SK-N-SH (cell line): ENCODE measurements at regions of chr3 and their contacts with region 1.

Region 1: DNA sequence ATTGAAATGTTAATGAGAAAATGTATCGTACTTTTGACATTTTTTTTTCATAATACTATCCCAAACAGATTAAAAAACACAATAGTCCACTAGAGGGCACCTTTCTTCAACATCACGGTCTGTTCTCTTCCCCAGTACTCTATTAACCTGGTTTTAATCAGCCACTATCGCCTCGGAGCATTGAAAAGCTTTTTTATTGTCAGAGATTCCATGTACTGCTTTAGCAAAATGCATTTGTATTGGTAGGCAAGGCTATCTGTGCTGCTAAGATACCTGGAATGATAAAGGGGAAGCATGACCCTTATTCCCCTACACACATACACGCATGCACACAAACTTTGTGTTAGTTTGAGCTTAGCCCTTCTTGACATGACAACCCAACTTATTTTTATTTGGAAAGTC is 160.1 kb upstream of the IL12A start:
- DNase-seq: peak; percentile 74
- H3K4me3 ChIP-seq: peak overlapping the region in 1 of 2 experiments; percentile 23; a peak in 1 of 4 replicates
- H3K27ac ChIP-seq: peak overlapping the region; percentile 4 to 96; a peak in 3 of 4 replicates
- H3K4me1 ChIP-seq: peaks cover 20 to 39% of the 10 kb centered on the region in 2 experiments
- H3K27me3 ChIP-seq: no peaks in the 10 kb centered on the region
- CTCF ChIP-seq: peak; percentile 73
- EP300 ChIP-seq: peak in 1 of 2 experiments; percentile 81; a peak in 2 of 4 replicates
- RAD21 ChIP-seq: peak; percentile 89

Region 2: GRCh38 chr3:159751146-159751545 is 77.4 kb before region 1 on chr3:
- CTCF ChIA-PET with region 1: no interaction called
- POLR2A ChIA-PET with region 1: no interaction called
- DNase-seq: no peak
- H3K4me3 ChIP-seq: no peak overlapping the region
- H3K27ac ChIP-seq: no peak overlapping the region
- H3K4me1 ChIP-seq: no peaks in the 10 kb centered on the region
- H3K27me3 ChIP-seq: no peaks in the 10 kb centered on the region
- CTCF ChIP-seq: no peak
- EP300 ChIP-seq: no peak
- RAD21 ChIP-seq: no peak

Region 3: DNA sequence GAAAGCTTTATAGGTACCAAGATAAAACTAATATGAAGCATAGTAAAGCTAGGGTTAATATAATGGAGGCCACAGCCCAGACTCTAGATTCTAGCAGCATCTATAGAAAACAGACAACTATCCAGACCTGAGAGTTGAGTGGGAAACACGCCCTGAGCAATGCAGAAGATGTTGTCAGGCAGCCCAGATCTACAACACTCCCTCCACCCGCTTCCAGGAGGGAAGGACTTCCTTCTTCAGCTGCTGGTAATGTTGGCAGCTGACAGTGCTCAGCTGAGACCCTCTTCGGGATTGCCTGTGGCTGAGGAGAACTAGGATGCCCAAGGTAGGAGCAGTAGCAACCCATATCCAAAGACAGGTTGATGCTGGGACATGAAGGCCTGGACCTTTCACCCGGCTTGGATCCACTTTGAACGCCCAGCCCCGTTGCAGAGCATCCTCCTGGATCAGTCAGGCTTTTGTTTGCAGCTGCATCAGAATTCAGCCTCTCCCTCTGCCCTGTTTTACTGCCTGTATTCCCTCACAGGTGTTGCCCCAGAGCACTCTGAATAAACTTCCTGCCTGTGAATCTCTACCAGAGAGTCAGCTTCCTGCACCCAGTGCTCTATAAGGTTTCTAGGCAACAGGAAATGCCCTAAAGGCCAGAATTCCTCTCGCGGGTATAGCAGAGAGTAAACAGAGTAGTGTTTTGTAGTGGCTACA is 14.6 kb before region 1 on chr3:
- CTCF ChIA-PET with region 1: interaction called, 44 read pairs
- POLR2A ChIA-PET with region 1: no interaction called
- DNase-seq: no peak
- H3K4me3 ChIP-seq: no peak overlapping the region
- H3K27ac ChIP-seq: no peak overlapping the region
- H3K4me1 ChIP-seq: peaks cover 0 to 15% of the 10 kb centered on the region in 2 experiments; a peak in 1 of 4 replicates
- H3K27me3 ChIP-seq: no peaks in the 10 kb centered on the region
- CTCF ChIP-seq: no peak
- EP300 ChIP-seq: no peak
- RAD21 ChIP-seq: no peak

Region 4: GRCh38 chr3:159852821-159853505 is 24.4 kb after region 1 on chr3:
- CTCF ChIA-PET with region 1: interaction called, 160 read pairs
- POLR2A ChIA-PET with region 1: interaction called, 8 read pairs
- DNase-seq: no peak
- H3K4me3 ChIP-seq: peak overlapping the region; percentile 39 to 53
- H3K27ac ChIP-seq: peak overlapping the region; percentile 93 to 100
- H3K4me1 ChIP-seq: peaks cover 30 to 72% of the 10 kb centered on the region in 2 experiments
- H3K27me3 ChIP-seq: no peaks in the 10 kb centered on the region
- CTCF ChIP-seq: no peak
- EP300 ChIP-seq: no peak
- RAD21 ChIP-seq: no peak

Region 5: DNA sequence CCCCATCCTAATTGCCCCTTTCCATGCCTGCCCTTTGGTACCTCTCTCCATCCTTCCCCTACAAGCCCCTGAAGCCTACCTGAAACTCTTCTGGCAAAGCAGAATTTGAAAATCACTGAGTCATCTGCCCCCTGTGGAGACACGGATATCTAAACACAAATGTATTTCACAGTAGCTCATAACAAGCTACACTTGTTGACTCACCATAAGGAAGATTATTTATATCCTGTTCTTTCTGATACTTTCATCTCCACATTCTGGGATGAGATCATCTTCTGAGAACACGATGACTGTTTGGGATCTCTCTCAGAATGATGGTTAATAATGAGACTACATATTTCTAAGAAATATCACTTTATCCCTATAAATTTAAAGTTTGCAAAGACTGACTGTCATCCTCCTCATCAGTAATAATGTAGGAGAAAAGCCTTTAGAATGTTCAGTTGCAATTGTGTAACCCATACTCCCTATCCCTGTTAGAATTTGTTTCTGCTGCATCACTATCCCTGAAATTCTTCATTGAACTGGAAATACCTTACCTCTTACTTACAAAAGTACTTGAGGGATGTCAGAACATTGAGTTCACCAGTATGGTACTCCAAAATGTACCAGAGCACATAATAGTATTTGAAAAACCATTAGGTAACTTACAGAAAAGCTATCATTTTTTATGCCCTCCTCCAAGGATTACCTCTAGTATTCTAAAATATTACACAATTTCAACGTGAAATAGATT is 44.0 kb after region 1 on chr3:
- CTCF ChIA-PET with region 1: interaction called, 20 read pairs
- POLR2A ChIA-PET with region 1: no interaction called
- DNase-seq: no peak
- H3K4me3 ChIP-seq: no peak overlapping the region
- H3K27ac ChIP-seq: peak overlapping the region; percentile 53 to 73; a peak in 3 of 4 replicates
- H3K4me1 ChIP-seq: peaks cover 16 to 17% of the 10 kb centered on the region in 2 experiments
- H3K27me3 ChIP-seq: no peaks in the 10 kb centered on the region
- CTCF ChIP-seq: peak; percentile 49
- EP300 ChIP-seq: peak in 1 of 2 experiments; percentile 79; a peak in 2 of 4 replicates
- RAD21 ChIP-seq: no peak

Region 6: DNA sequence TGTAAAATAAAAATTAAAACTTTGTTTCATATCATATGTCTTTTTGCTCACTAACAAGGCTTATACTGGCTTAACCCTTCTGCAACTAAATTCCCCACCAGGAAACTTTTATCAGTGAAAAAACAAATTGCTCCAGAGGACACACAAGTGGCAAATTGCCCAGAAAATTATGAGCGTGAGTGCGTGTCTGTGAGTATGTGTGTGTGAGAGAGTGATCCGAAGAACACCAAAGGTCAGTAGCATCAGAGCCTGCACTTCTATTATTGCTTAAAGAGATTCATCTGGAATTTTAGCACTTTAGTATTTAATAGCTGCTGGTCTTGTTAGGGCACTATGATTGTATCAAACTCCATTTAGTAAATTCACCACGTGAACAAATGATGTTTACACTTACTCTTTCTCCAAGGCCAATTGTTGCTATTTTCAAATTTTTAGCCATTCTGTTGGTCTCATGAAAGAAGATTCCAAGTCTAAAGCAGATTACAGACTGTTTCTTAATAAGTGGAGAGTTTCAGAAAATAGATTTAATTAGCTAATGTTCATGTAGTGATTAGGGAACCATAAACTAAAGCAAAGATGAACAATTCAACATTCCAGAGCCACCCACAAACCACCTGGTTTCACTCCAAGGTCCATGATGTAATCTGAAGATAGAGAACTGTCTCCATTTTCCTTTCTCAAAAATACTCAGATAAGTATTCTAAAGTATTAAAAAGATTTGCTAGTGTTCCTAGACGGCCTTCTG is 69.0 kb after region 1 on chr3:
- CTCF ChIA-PET with region 1: interaction called, 189 read pairs
- POLR2A ChIA-PET with region 1: no interaction called
- DNase-seq: peak; percentile 21
- H3K4me3 ChIP-seq: no peak overlapping the region
- H3K27ac ChIP-seq: peak overlapping the region; percentile 5 to 69; a peak in 3 of 4 replicates
- H3K4me1 ChIP-seq: peaks cover 0 to 27% of the 10 kb centered on the region in 2 experiments; a peak in 3 of 4 replicates
- H3K27me3 ChIP-seq: no peaks in the 10 kb centered on the region
- CTCF ChIP-seq: no peak
- EP300 ChIP-seq: peak in 1 of 2 experiments; percentile 59; a peak in 2 of 4 replicates
- RAD21 ChIP-seq: no peak

Region 7: GRCh38 chr3:160012108-160012507 is 183.6 kb after region 1 on chr3:
- CTCF ChIA-PET with region 1: interaction called, 173 read pairs
- POLR2A ChIA-PET with region 1: no interaction called
- DNase-seq: no peak
- H3K4me3 ChIP-seq: no peak overlapping the region
- H3K27ac ChIP-seq: no peak overlapping the region
- H3K4me1 ChIP-seq: no peaks in the 10 kb centered on the region
- H3K27me3 ChIP-seq: no peaks in the 10 kb centered on the region
- CTCF ChIP-seq: no peak
- EP300 ChIP-seq: no peak
- RAD21 ChIP-seq: no peak